GM12878 (cell line): ENCODE measurements at regions of chr5 and their contacts with region 1.

Region 1: GRCh38 chr5:119315516-119315949 is 40.3 kb upstream of the TNFAIP8 start:
- DNase-seq: peak; percentile 69
- ATAC-seq: peak; percentile 89
- H3K4me3 ChIP-seq: no peak overlapping the region
- H3K27ac ChIP-seq: peak overlapping the region; percentile 68
- H3K4me1 ChIP-seq: peaks cover 64% of the 10 kb centered on the region
- H3K27me3 ChIP-seq: no peaks in the 10 kb centered on the region
- CTCF ChIP-seq: peak; percentile 61 to 73 (median 63); a peak in 5 of 6 replicates
- EP300 ChIP-seq: no peak
- POLR2A ChIP-seq: no peak
- RAD21 ChIP-seq: peak; percentile 87

Region 2: GRCh38 chr5:118987988-118988865 is 327.3 kb before region 1 on chr5 and contains the start of gene DTWD2:
- CTCF ChIA-PET with region 1: interaction called, 25 read pairs
- POLR2A ChIA-PET with region 1: no interaction called
- RAD21 ChIA-PET with region 1: interaction called, 20 read pairs
- SMC1A ChIA-PET with region 1: interaction called, 11 read pairs
- in situ Hi-C with region 1: no loop called
- intact Hi-C with region 1: no loop called
- DNase-seq: peak; percentile 81
- ATAC-seq: peak; percentile 96
- H3K4me3 ChIP-seq: peak within 1 kb of the TSS; percentile 74
- H3K27ac ChIP-seq: peak within 1 kb of the TSS; percentile 75
- H3K4me1 ChIP-seq: peaks cover 7% of the 10 kb centered on the region; the same call in 1 of the 2 replicates
- H3K27me3 ChIP-seq: no peaks in the 10 kb centered on the region
- CTCF ChIP-seq: peak; percentile 71 to 96 (median 92)
- EP300 ChIP-seq: 0 out of 4 replicates have a peak, but pooled peaks have one; percentile 8
- POLR2A ChIP-seq: peak; percentile 83
- RAD21 ChIP-seq: peak; percentile 86
- polyA plus RNA-seq, gene DTWD2: 0.93 to 1.0 TPM

Region 3: DNA sequence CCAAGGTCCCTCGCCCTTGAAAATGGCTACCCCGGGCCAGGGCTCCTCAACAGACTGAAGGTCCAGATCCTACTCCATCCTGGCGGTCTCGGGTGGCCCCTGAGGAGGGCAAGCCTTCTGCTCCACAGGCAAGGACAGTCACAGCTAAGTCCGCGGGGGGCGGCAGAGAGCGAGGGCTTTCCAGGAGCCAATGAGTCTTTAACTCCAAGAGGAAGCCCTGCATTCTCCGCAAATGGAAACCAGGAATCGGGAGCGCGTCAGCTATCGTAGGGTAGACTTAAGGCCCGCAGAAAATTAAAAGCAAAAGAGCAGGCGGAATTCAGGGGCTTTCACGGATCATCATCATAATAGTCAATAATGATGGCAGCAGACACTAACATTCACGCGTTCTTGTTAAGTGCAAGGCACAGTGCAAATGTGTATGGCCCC is 47.6 kb before region 1 on chr5:
- CTCF ChIA-PET with region 1: interaction called, 32 read pairs
- POLR2A ChIA-PET with region 1: interaction called, 9 read pairs
- RAD21 ChIA-PET with region 1: interaction called, 38 read pairs
- SMC1A ChIA-PET with region 1: interaction called, 79 read pairs
- in situ Hi-C with region 1: no loop called
- intact Hi-C with region 1: no loop called
- DNase-seq: peak; percentile 81
- ATAC-seq: peak; percentile 81
- H3K4me3 ChIP-seq: peak overlapping the region; percentile 99
- H3K27ac ChIP-seq: peak overlapping the region; percentile 90
- H3K4me1 ChIP-seq: peaks cover 13% of the 10 kb centered on the region
- H3K27me3 ChIP-seq: no peaks in the 10 kb centered on the region
- CTCF ChIP-seq: peak; percentile 63 to 80 (median 68)
- EP300 ChIP-seq: no peak
- POLR2A ChIP-seq: no peak
- RAD21 ChIP-seq: peak; percentile 46; the same call in 1 of the 2 replicates

Region 4: GRCh38 chr5:119302916-119303897 is 12.3 kb before region 1 on chr5:
- CTCF ChIA-PET with region 1: interaction called, 21 read pairs
- POLR2A ChIA-PET with region 1: interaction called, 8 read pairs
- RAD21 ChIA-PET with region 1: interaction called, 7 read pairs
- SMC1A ChIA-PET with region 1: interaction called, 7 read pairs
- in situ Hi-C with region 1: no loop called
- intact Hi-C with region 1: no loop called
- DNase-seq: no peak
- ATAC-seq: peak; percentile 65
- H3K4me3 ChIP-seq: no peak overlapping the region
- H3K27ac ChIP-seq: no peak overlapping the region
- H3K4me1 ChIP-seq: peaks cover 23% of the 10 kb centered on the region
- H3K27me3 ChIP-seq: no peaks in the 10 kb centered on the region
- CTCF ChIP-seq: no peak
- EP300 ChIP-seq: no peak
- POLR2A ChIP-seq: no peak
- RAD21 ChIP-seq: no peak

Region 5: GRCh38 chr5:119347991-119348390 is 32.5 kb after region 1 on chr5:
- CTCF ChIA-PET with region 1: interaction called, 27 read pairs
- POLR2A ChIA-PET with region 1: interaction called, 4 read pairs
- RAD21 ChIA-PET with region 1: interaction called, 113 read pairs
- SMC1A ChIA-PET with region 1: interaction called, 318 read pairs
- in situ Hi-C with region 1: no loop called
- intact Hi-C with region 1: no loop called
- DNase-seq: no peak
- ATAC-seq: no peak
- H3K4me3 ChIP-seq: no peak overlapping the region
- H3K27ac ChIP-seq: peak overlapping the region; percentile 21; the same call in 1 of the 2 replicates
- H3K4me1 ChIP-seq: peaks cover 70% of the 10 kb centered on the region
- H3K27me3 ChIP-seq: no peaks in the 10 kb centered on the region
- CTCF ChIP-seq: no peak
- EP300 ChIP-seq: no peak
- POLR2A ChIP-seq: no peak
- RAD21 ChIP-seq: no peak

Region 6: GRCh38 chr5:119367502-119368237 is 52.1 kb after region 1 on chr5:
- CTCF ChIA-PET with region 1: interaction called, 38 read pairs
- POLR2A ChIA-PET with region 1: interaction called, 3 read pairs
- RAD21 ChIA-PET with region 1: interaction called, 56 read pairs
- SMC1A ChIA-PET with region 1: interaction called, 60 read pairs
- in situ Hi-C with region 1: no loop called
- intact Hi-C with region 1: no loop called
- DNase-seq: peak; percentile 81
- ATAC-seq: peak; percentile 72
- H3K4me3 ChIP-seq: peak overlapping the region; percentile 59
- H3K27ac ChIP-seq: peak overlapping the region; percentile 95
- H3K4me1 ChIP-seq: peaks cover 44% of the 10 kb centered on the region
- H3K27me3 ChIP-seq: no peaks in the 10 kb centered on the region
- CTCF ChIP-seq: no peak
- EP300 ChIP-seq: peak; percentile 92 to 95
- POLR2A ChIP-seq: no peak
- RAD21 ChIP-seq: 0 out of 2 replicates have a peak, but pooled peaks have one; percentile 8

Region 7: GRCh38 chr5:119418531-119419116 is 103.1 kb after region 1 on chr5:
- CTCF ChIA-PET with region 1: interaction called, 413 read pairs
- POLR2A ChIA-PET with region 1: interaction called, 16 read pairs
- RAD21 ChIA-PET with region 1: interaction called, 303 read pairs
- SMC1A ChIA-PET with region 1: interaction called, 393 read pairs
- in situ Hi-C with region 1: no loop called
- intact Hi-C with region 1: no loop called
- DNase-seq: no peak
- ATAC-seq: peak; percentile 73
- H3K4me3 ChIP-seq: no peak overlapping the region
- H3K27ac ChIP-seq: no peak overlapping the region
- H3K4me1 ChIP-seq: peaks cover 8% of the 10 kb centered on the region; the same call in 1 of the 2 replicates
- H3K27me3 ChIP-seq: no peaks in the 10 kb centered on the region
- CTCF ChIP-seq: no peak
- EP300 ChIP-seq: no peak
- POLR2A ChIP-seq: no peak
- RAD21 ChIP-seq: no peak

Region 8: GRCh38 chr5:119515192-119515591 is 199.7 kb after region 1 on chr5:
- CTCF ChIA-PET with region 1: no interaction called
- POLR2A ChIA-PET with region 1: no interaction called
- RAD21 ChIA-PET with region 1: no interaction called
- SMC1A ChIA-PET with region 1: no interaction called
- in situ Hi-C with region 1: no loop called
- intact Hi-C with region 1: no loop called
- DNase-seq: no peak
- ATAC-seq: no peak
- H3K4me3 ChIP-seq: no peak overlapping the region
- H3K27ac ChIP-seq: no peak overlapping the region
- H3K4me1 ChIP-seq: no peaks in the 10 kb centered on the region
- H3K27me3 ChIP-seq: no peaks in the 10 kb centered on the region
- CTCF ChIP-seq: no peak
- EP300 ChIP-seq: no peak
- POLR2A ChIP-seq: no peak
- RAD21 ChIP-seq: no peak